ENCODE measurements at regions of chr2 and their contacts with region 1.

Region 1: DNA sequence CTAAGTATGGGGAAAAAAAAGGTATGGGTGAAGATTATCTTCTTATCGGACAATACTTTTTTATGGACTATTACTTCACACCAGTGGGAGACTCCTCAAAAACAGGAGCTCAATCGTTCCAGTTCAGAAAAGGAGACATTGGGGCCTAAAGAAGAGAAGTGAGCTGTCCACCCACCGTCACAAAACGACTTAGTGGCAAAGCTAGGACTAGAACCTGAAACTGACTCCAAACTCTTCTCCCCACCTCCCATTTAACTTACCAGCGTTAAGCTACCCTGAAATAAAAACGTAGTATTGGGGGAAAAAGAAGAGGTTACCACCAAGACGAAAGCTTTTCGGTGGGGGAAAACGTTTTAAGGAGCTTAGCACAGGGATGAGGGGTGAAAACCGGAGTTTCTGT is 503 bp downstream of the GTF3C3 start:
- DNase-seq: no peak
- ATAC-seq: no peak
- H3K4me3 ChIP-seq: peak overlapping the region; percentile 94
- H3K27ac ChIP-seq: peak overlapping the region; percentile 21; the same call in 1 of the 2 replicates
- H3K4me1 ChIP-seq: peaks cover 21% of the 10 kb centered on the region
- H3K27me3 ChIP-seq: no peaks in the 10 kb centered on the region
- CTCF ChIP-seq: no peak

Region 2: DNA sequence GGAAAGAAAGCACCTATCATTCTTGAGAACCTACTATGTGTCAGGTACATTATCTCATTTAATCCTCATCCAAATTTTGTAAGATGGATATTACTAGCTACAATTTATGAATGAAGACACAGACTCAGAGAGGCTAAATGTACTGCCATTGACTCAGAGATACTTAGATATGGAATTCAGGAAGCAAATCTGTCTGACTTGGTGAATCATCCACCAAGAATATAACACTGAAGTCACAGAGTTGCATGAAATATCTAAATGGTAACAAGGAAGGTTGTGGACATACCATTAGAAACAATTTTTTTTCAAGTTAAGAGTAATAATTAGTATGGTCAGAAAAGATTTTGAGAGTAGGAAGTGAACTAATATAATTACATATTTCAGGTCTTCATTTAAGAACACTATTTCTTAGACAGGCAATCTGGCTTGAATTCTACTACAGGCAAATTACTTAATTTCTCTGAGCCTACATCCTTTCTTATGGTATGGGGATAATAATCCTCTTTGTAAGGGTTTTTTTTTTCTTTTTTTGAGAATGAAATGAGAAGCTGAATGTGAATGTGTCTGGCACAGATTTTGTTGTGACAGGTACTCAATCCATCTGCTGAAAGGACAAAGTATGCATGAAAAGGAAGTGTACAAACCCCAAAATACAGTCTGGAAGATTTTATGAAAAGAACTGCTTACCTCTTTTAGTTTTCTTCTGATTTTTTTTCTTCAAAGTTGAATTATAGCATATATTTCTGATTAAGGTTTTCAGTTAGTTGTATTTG is 25.0 kb after region 1 on chr2:
- CTCF ChIA-PET with region 1: no interaction called
- POLR2A ChIA-PET with region 1: no interaction called
- intact Hi-C with region 1: no loop called
- DNase-seq: peak; percentile 69
- ATAC-seq: peak; percentile 89
- H3K4me3 ChIP-seq: no peak overlapping the region
- H3K27ac ChIP-seq: no peak overlapping the region
- H3K4me1 ChIP-seq: peaks cover 10% of the 10 kb centered on the region; the same call in 1 of the 2 replicates
- H3K27me3 ChIP-seq: no peaks in the 10 kb centered on the region
- CTCF ChIP-seq: no peak

Region 3: DNA sequence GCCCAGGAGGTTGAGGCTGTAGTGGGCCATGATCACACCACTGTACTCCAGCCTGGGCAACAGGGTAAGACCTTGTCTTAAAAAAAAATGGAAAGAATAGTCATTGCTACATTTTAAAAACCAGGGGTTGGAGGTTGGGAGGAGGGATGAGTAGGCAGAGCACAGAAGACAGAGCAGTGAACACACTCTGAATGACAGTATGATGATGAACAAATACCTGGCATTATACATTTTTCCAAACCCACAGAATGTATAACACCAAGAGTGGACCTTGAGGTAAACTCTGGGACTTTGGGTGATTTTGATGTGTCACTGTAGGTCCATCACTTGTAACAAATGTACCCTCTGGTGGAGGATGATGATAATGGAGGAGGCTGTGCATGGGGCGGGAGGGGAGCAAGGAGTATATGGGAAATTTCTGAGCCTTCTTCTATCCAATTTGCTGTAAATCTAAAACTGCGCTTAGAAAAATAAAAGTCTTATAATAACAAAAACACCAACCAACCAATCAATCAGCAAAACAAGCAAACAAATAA is 239.0 kb after region 1 on chr2:
- CTCF ChIA-PET with region 1: no interaction called
- POLR2A ChIA-PET with region 1: no interaction called
- intact Hi-C with region 1: loop called (anchors 1 kb)
- DNase-seq: peak; percentile 48
- ATAC-seq: peak; percentile 56
- H3K4me3 ChIP-seq: no peak overlapping the region
- H3K27ac ChIP-seq: no peak overlapping the region
- H3K4me1 ChIP-seq: no peaks in the 10 kb centered on the region
- H3K27me3 ChIP-seq: no peaks in the 10 kb centered on the region
- CTCF ChIP-seq: peak; percentile 52